ENCODE measurements at regions of chr15 and their contacts with region 1.

Region 1: DNA sequence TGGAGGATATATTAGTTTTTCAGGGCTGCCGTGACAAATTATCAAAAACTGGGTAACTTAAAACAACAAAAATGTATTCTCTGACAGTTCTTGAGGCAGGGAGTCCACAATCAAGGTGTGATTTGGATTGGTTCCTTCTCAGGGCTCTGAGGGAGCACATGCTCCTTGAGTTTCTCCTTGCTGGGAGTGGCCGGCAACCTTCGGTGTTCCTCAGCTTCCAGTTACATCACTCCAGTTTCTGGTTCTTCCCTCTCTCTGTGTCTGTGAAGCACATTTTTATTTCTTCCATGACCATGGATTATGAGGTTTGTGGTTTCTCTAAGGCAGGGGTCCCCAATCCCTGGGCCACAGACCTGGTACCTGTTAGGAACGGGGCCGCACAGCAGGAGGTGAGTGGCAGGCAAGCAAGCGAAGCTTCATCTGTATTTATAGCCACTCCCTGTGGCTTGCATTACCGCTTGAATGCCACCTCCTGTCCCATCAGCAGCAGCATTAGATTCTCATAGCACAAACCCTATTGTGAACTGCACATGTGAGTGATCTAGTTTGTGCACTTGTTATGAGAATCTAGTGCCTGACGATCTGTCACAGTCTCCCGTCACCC is 24.3 kb downstream of the LRRC28 start:
- DNase-seq: no peak
- H3K4me3 ChIP-seq: no peak overlapping the region
- H3K27ac ChIP-seq: no peak overlapping the region
- H3K4me1 ChIP-seq: no peaks in the 10 kb centered on the region; a peak in 1 of 4 replicates
- H3K27me3 ChIP-seq: no peaks in the 10 kb centered on the region
- CTCF ChIP-seq: no peak
- EP300 ChIP-seq: no peak
- RAD21 ChIP-seq: no peak

Region 2: GRCh38 chr15:99250494-99251435 is 24.9 kb before region 1 on chr15:
- CTCF ChIA-PET with region 1: interaction called, 18 read pairs
- POLR2A ChIA-PET with region 1: no interaction called
- DNase-seq: peak; percentile 98
- H3K4me3 ChIP-seq: peak overlapping the region; percentile 83 to 92
- H3K27ac ChIP-seq: peak overlapping the region; percentile 86 to 94
- H3K4me1 ChIP-seq: peaks cover 8 to 18% of the 10 kb centered on the region in 2 experiments; a peak in 3 of 4 replicates
- H3K27me3 ChIP-seq: no peaks in the 10 kb centered on the region
- CTCF ChIP-seq: no peak
- EP300 ChIP-seq: no peak; a peak in 1 of 4 replicates
- RAD21 ChIP-seq: no peak

Region 3: DNA sequence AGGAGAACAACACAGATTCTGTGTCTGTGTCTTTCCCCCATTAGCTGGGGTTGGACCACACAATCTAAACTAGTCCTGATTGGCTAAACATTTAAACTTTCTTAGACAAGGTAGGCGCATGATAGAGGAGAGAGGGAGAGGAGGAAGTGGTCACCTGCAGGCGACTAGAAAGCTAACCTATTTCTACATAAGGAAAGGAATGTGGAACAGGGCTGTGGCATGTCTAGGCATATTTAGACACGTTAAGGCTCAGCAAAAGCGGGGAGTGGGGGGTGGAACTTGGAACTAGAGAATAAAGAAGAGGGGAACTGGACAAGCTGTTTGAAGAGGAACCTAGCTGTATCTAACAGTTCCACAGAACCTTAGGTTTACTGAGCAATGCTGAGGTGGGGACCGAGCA is 11.5 kb before region 1 on chr15:
- CTCF ChIA-PET with region 1: interaction called, 29 read pairs
- POLR2A ChIA-PET with region 1: interaction called, 3 read pairs
- DNase-seq: no peak
- H3K4me3 ChIP-seq: no peak overlapping the region
- H3K27ac ChIP-seq: no peak overlapping the region
- H3K4me1 ChIP-seq: no peaks in the 10 kb centered on the region
- H3K27me3 ChIP-seq: no peaks in the 10 kb centered on the region
- CTCF ChIP-seq: no peak
- EP300 ChIP-seq: no peak
- RAD21 ChIP-seq: no peak

Region 4: GRCh38 chr15:99733268-99734039 is 457.8 kb after region 1 on chr15 and contains the start of gene LYSMD4:
- CTCF ChIA-PET with region 1: interaction called, 15 read pairs
- POLR2A ChIA-PET with region 1: no interaction called
- DNase-seq: peak; percentile 100
- H3K4me3 ChIP-seq: peak within 1 kb of the TSS; percentile 83 to 88
- H3K27ac ChIP-seq: peak within 1 kb of the TSS in 1 of 2 experiments; percentile 58; a peak in 1 of 4 replicates
- H3K4me1 ChIP-seq: peaks cover 0 to 10% of the 10 kb centered on the region in 2 experiments; a peak in 1 of 4 replicates
- H3K27me3 ChIP-seq: no peaks in the 10 kb centered on the region
- CTCF ChIP-seq: no peak
- EP300 ChIP-seq: no peak
- RAD21 ChIP-seq: no peak
- polyA plus RNA-seq, gene LYSMD4: 5.1 and 6.1 TPM in 2 replicates

Region 5: DNA sequence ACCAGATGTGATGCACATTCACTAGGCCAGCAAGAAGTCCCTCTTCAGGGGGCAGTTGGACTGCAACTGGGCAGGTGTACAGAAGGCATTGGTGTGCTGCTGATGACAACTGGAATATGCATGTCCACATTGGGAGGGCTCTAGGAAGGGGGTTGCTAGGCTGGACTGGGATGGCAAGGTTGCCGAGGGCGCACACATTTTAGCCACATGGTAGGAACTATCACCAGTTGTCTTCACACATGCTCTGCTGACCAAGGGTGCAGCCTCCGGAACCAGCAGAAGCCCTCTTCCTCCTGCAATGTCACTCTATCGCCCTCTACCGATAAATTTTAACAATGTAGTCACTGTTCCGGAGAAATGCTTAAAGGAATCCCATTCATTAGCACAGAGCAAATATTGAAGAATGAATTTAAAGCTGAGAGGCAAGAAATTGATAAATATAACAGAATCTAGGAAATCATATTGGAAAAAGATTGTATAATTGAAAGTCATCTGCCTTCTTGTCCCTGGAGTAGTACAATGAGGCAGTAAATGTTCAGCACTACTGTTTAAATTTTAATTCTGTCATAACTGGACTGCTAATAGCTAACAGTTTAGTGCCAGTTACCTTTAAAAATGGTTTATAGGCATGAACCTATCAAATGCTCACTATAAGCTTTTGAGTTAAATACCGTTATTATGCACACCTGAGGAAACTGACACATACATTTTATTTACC is 480.2 kb after region 1 on chr15:
- CTCF ChIA-PET with region 1: interaction called, 20 read pairs
- POLR2A ChIA-PET with region 1: no interaction called
- DNase-seq: peak; percentile 68
- H3K4me3 ChIP-seq: no peak overlapping the region; a peak in 1 of 4 replicates
- H3K27ac ChIP-seq: no peak overlapping the region
- H3K4me1 ChIP-seq: no peaks in the 10 kb centered on the region; a peak in 1 of 4 replicates
- H3K27me3 ChIP-seq: no peaks in the 10 kb centered on the region
- CTCF ChIP-seq: peak; percentile 83
- EP300 ChIP-seq: no peak
- RAD21 ChIP-seq: peak; percentile 84

Measured in SK-N-SH (cell line).